SK-N-SH (cell line): ENCODE measurements at regions of chr1 and their contacts with region 1.

Region 1: DNA sequence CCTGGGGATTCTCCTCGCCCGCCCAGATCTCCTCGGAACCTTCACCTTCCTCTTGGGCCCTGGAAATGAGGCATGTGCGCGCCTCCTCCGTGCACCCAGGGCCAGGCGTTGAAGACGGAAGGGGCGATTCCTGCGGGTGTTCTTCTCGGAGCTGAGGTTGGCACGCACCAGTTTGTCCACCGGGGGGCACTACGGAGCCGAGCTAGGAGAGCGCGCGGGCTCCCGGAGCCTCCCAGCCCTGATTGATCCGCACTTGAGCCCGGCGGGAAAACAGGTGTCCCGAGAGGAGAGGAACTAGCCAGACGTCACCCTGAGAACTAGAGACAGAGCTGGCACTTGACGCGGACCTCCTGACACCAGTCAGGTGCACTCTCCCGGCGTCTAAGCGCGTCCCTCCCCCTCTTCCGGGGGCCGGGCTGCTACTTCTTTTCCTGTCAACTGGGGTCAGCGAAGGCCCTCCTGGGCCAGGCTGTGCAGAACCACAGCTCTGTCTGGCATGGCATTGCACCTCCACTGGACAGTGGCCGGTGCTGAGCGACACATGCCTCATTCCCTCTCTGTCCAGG is 18.3 kb upstream of the SERINC2 start:
- DNase-seq: peak; percentile 88
- H3K4me3 ChIP-seq: peak overlapping the region; percentile 41 to 58; a peak in 3 of 4 replicates
- H3K27ac ChIP-seq: no peak overlapping the region
- H3K4me1 ChIP-seq: peaks cover 3 to 12% of the 10 kb centered on the region in 2 experiments; a peak in 2 of 4 replicates
- H3K27me3 ChIP-seq: no peaks in the 10 kb centered on the region
- CTCF ChIP-seq: peak; percentile 86
- EP300 ChIP-seq: no peak
- RAD21 ChIP-seq: peak; percentile 79

Region 2: GRCh38 chr1:31372961-31373896 is 21.5 kb before region 1 on chr1 and contains the start of gene FABP3:
- CTCF ChIA-PET with region 1: interaction called, 16 read pairs
- POLR2A ChIA-PET with region 1: no interaction called
- DNase-seq: peak; percentile 68
- H3K4me3 ChIP-seq: no peak within 1 kb of the TSS
- H3K27ac ChIP-seq: peak within 1 kb of the TSS in 1 of 2 experiments; percentile 7; a peak in 2 of 4 replicates
- H3K4me1 ChIP-seq: peaks cover 0 to 26% of the 10 kb centered on the region in 2 experiments; a peak in 1 of 4 replicates
- H3K27me3 ChIP-seq: no peaks in the 10 kb centered on the region
- CTCF ChIP-seq: no peak
- EP300 ChIP-seq: no peak
- RAD21 ChIP-seq: no peak
- polyA plus RNA-seq, gene FABP3: 0.08 TPM in 1 of 2 replicates, not detected in the other

Region 3: GRCh38 chr1:31381394-31382287 is 13.1 kb before region 1 on chr1:
- CTCF ChIA-PET with region 1: interaction called, 35 read pairs
- POLR2A ChIA-PET with region 1: interaction called, 4 read pairs
- DNase-seq: no peak
- H3K4me3 ChIP-seq: no peak overlapping the region
- H3K27ac ChIP-seq: peak overlapping the region in 1 of 2 experiments; percentile 74; a peak in 2 of 4 replicates
- H3K4me1 ChIP-seq: peaks cover 0 to 30% of the 10 kb centered on the region in 2 experiments; a peak in 1 of 4 replicates
- H3K27me3 ChIP-seq: no peaks in the 10 kb centered on the region
- CTCF ChIP-seq: no peak
- EP300 ChIP-seq: no peak
- RAD21 ChIP-seq: no peak

Region 4: DNA sequence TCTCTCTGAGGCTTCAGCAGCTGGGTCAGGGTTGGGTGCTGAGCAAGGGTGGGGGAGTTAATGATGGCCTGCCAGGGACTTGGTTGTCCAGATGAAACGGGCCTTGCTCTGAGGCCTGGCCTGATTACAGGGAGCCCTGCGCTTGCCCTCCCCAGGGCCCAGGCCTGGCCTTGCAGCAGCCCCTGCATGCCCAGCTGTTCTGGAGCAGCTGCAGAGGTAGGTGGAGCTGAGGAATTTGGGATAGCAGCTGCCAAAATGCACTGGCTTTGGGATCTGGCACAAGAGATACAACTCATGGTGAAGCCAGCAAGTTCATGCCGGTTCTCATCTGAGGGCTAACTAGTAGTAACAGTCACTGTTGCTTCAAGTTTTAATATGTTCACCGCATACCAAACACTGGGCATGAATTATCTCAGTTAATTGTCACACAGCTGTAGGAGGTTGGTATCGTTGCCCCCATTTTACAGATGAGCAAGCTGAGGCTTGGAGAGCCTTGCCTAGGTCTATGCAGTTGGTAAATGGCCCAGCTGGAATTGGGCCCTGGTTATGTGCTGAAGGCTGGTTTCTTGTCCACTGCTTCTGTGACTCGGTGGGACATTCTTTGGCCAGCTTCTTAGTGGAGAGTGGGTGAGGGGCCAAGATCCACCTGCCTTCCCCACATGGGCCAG is 11.0 kb after region 1 on chr1:
- CTCF ChIA-PET with region 1: interaction called, 287 read pairs
- POLR2A ChIA-PET with region 1: no interaction called
- DNase-seq: no peak
- H3K4me3 ChIP-seq: no peak overlapping the region
- H3K27ac ChIP-seq: no peak overlapping the region
- H3K4me1 ChIP-seq: no peaks in the 10 kb centered on the region
- H3K27me3 ChIP-seq: no peaks in the 10 kb centered on the region
- CTCF ChIP-seq: no peak
- EP300 ChIP-seq: no peak
- RAD21 ChIP-seq: no peak

Region 5: GRCh38 chr1:31422505-31423319 is 28.0 kb after region 1 on chr1:
- CTCF ChIA-PET with region 1: interaction called, 287 read pairs
- POLR2A ChIA-PET with region 1: no interaction called
- DNase-seq: peak; percentile 89
- H3K4me3 ChIP-seq: no peak overlapping the region; a peak in 1 of 4 replicates
- H3K27ac ChIP-seq: 0 out of 4 replicates have a peak overlapping the region, but pooled peaks of 1 of the 2 experiments have one; percentile 19
- H3K4me1 ChIP-seq: no peaks in the 10 kb centered on the region; a peak in 1 of 4 replicates
- H3K27me3 ChIP-seq: no peaks in the 10 kb centered on the region
- CTCF ChIP-seq: peak; percentile 95
- EP300 ChIP-seq: no peak
- RAD21 ChIP-seq: peak; percentile 98

Region 6: GRCh38 chr1:31576201-31576669 is 181.5 kb after region 1 on chr1 and contains the start of gene TINAGL1:
- CTCF ChIA-PET with region 1: no interaction called
- POLR2A ChIA-PET with region 1: no interaction called
- DNase-seq: no peak
- H3K4me3 ChIP-seq: no peak within 1 kb of the TSS
- H3K27ac ChIP-seq: no peak within 1 kb of the TSS
- H3K4me1 ChIP-seq: peaks cover 14 to 17% of the 10 kb centered on the region in 2 experiments; a peak in 3 of 4 replicates
- H3K27me3 ChIP-seq: no peaks in the 10 kb centered on the region
- CTCF ChIP-seq: no peak
- EP300 ChIP-seq: no peak
- RAD21 ChIP-seq: no peak
- polyA plus RNA-seq, gene TINAGL1: 0.23 TPM in 1 of 2 replicates, not detected in the other